ENCODE measurements at regions of chr10 and their contacts with region 1.

Region 1: DNA sequence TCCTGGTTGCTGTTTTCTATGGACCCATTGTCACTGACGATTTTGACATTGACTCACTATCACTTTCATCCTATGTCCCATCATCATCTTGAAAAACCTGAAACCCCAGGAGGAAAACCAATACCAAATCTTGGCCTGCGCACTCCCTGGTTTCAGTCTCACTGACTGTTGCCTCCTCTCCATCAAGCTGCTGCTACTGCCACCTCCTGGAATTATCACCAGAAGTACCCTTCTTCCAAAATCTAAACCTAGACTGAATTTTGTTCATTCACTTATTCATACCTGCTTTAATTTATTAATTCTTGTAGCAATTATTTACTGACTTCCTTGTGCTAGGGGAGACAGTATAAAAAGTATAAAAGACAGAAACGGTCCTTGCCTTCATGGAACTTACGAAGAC is 44.5 kb upstream of the ACBD5 start:
- DNase-seq: no peak
- H3K4me3 Mint-ChIP-seq: no peak overlapping the region
- H3K27ac Mint-ChIP-seq: no peak overlapping the region
- H3K4me1 Mint-ChIP-seq: peaks cover 7% of the 10 kb centered on the region
- H3K27me3 Mint-ChIP-seq: peaks cover 5% of the 10 kb centered on the region

Region 2: DNA sequence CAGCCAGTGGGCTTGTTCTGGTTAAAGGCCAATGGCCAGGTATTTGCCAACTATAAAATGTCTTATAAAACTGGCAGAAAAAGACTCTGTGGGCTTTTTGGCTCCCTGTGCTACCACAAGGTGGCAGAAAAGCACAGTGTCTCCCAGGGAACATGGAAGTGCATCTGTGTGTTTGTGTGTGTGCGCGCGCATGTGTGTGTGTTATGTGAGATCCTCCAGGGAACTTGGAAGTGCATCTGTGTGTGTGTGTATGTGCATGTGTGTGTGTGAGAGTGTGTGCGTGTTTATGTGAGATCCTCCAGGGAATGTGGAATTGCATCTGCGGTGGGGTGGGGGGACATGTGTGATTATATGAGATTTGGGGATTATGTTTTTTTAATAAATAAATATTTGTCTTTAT is 394.2 kb before region 1 on chr10:
- intact Hi-C with region 1: loop called (anchors 2 kb)
- DNase-seq: peak; percentile 22
- H3K4me3 Mint-ChIP-seq: no peak overlapping the region
- H3K27ac Mint-ChIP-seq: no peak overlapping the region
- H3K4me1 Mint-ChIP-seq: no peaks in the 10 kb centered on the region
- H3K27me3 Mint-ChIP-seq: peaks cover 8% of the 10 kb centered on the region

Region 3: GRCh38 chr10:27207350-27207749 is 77.8 kb before region 1 on chr10:
- intact Hi-C with region 1: no loop called
- DNase-seq: no peak
- H3K4me3 Mint-ChIP-seq: no peak overlapping the region
- H3K27ac Mint-ChIP-seq: no peak overlapping the region
- H3K4me1 Mint-ChIP-seq: no peaks in the 10 kb centered on the region
- H3K27me3 Mint-ChIP-seq: no peaks in the 10 kb centered on the region

Region 4: DNA sequence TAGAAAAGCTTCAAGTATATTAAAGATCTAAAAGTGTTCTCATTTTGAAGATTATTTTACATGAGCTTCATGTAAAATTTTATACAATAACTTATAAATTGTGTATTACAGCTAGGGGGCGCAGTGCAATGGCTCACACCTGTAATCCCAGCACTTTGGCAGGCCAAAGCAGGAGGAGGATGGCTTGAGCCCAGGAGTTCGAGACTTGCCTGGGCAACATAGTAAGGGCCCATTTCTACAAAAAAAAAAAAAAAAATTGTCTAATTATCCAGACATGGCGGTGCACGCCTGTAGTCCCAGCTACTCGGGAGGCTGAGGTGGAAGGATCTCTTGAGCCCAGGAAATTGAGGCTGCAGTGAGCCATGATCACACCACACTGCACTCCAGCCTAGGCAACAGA is 61.1 kb before region 1 on chr10:
- intact Hi-C with region 1: loop called (anchors 1 kb)
- DNase-seq: no peak
- H3K4me3 Mint-ChIP-seq: no peak overlapping the region
- H3K27ac Mint-ChIP-seq: peak overlapping the region; percentile 34
- H3K4me1 Mint-ChIP-seq: peaks cover 11% of the 10 kb centered on the region
- H3K27me3 Mint-ChIP-seq: no peaks in the 10 kb centered on the region

Region 5: GRCh38 chr10:27646224-27647175 is 361.4 kb after region 1 on chr10:
- intact Hi-C with region 1: no loop called
- DNase-seq: no peak
- H3K4me3 Mint-ChIP-seq: no peak overlapping the region
- H3K27ac Mint-ChIP-seq: no peak overlapping the region
- H3K4me1 Mint-ChIP-seq: no peaks in the 10 kb centered on the region
- H3K27me3 Mint-ChIP-seq: peaks cover 13% of the 10 kb centered on the region